ENCODE measurements at regions of chr1 and their contacts with region 1.

Region 1: DNA sequence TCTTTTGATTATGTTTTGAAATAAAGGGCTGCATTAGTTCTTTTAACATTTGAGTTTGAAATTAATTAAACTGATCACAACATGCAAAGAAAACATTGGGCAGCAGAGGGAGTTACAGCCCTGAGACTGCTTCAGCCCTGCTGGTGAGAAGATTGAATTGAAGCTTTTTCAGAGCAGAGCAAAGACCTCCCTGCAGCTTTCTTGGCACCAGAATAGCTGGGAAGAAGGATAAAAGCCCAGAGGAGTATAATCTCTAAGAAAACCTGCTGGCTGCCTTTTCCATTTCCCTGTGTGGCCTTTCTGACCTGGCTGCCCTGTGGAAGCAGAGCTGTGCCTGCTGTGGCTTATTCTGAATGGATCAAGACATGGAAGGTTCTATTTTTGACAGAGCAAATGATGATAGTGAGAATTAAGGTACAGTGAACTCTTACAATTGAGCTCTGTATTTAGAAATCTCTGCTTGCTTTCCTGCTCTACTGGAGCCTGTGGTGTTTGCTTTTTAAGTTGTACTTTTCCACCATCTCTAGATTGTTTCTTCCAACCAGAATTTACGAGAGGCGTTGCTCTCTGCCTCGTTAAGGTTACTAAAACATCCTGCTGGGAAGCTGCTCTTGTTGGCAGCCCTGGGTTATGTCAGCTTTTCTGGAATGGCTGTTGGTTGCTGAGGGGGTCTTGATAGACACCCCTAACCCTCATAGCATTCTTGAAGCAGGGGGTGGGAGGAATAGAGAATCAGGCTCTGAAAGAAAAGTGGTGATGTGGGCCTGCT is 9.9 kb downstream of the SNRPE start:
- DNase-seq: peak; percentile 76 to 94
- ATAC-seq: peak; percentile 94 to 96
- H3K4me3 ChIP-seq: no peak overlapping the region
- H3K27ac ChIP-seq: peak overlapping the region in 1 of 2 experiments; percentile 23; a peak in 1 of 6 replicates
- H3K4me1 ChIP-seq: peaks cover 6% of the 10 kb centered on the region; the same call in 2 of the 3 replicates
- CTCF ChIP-seq: peak; percentile 96
- EP300 ChIP-seq: no peak
- POLR2A ChIP-seq: no peak
- RAD21 ChIP-seq: peak; percentile 96 to 98

Region 2: DNA sequence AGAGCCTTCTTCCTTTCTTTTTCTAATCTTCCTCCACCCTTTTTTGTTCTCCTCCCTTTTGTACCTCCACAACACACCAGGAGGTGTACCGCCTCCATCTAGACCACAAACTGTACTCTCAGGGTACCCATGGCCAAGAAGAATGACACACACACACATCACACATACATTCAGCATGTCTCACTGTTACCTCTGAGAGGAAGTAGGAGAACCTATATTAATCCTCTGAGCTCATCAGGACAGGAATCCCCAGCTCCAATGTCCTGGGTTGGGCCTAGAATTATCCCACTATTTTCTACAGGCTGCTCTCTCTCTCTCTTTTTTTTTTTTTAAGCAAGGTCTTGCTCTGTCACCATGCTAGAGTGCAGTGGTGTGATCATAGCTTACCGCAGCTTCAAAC is 208.0 kb before region 1 on chr1:
- CTCF ChIA-PET with region 1: no interaction called
- POLR2A ChIA-PET with region 1: no interaction called
- DNase-seq: peak; percentile 31 to 52
- ATAC-seq: peak; percentile 88 to 92
- H3K4me3 ChIP-seq: no peak overlapping the region
- H3K27ac ChIP-seq: peak overlapping the region; percentile 6 to 42; a peak in 2 of 6 replicates
- H3K4me1 ChIP-seq: peaks cover 18% of the 10 kb centered on the region; the same call in 2 of the 3 replicates
- CTCF ChIP-seq: no peak
- EP300 ChIP-seq: no peak
- POLR2A ChIP-seq: no peak
- RAD21 ChIP-seq: no peak

Region 3: GRCh38 chr1:203898458-203899244 is 27.4 kb after region 1 on chr1:
- CTCF ChIA-PET with region 1: interaction called, 30 read pairs
- POLR2A ChIA-PET with region 1: no interaction called
- DNase-seq: no peak
- ATAC-seq: peak; percentile 39 to 63; a peak in 4 of 6 replicates
- H3K4me3 ChIP-seq: no peak overlapping the region
- H3K27ac ChIP-seq: peak overlapping the region in 1 of 2 experiments; percentile 5; a peak in 1 of 6 replicates
- H3K4me1 ChIP-seq: peaks cover 16% of the 10 kb centered on the region; the same call in 2 of the 3 replicates
- CTCF ChIP-seq: no peak
- EP300 ChIP-seq: no peak
- POLR2A ChIP-seq: no peak
- RAD21 ChIP-seq: no peak

Region 4: DNA sequence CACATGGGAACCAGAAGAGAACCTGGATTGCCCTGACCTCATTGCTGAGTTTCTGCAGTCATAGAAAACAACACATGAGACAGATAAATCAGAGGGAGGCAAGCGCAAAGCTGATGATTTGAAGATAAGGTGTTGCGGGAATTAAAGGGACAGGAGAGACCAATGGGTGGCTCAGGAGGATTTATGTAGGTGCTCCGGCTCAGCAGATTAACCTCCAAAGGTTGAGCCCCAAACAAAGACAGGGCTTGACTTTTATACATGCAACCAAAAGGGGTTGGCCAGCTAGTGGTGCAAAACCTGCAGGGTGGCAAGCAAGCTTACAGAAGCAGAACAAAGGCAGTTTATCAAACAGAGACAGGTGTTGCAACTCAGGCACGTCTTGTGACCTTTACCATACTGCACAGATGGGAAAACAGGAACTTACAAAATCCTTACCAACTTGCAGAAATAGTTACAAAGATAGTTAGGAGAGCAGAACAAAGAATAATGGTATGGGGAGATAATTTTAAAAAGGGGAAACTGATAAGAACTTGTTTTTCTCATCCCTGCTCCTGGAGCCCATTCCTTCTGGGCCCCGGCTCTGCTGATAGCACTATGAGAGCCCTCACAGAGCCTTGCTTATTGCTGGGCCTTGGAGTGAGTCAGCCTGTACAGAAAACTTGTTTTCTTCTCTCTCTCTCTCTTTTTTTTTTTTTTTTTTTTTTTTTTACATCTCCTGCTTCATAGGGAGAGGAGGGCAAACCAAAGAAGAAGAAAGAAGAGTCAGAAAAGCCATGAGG is 83.7 kb after region 1 on chr1:
- CTCF ChIA-PET with region 1: interaction called, 10 read pairs
- POLR2A ChIA-PET with region 1: no interaction called
- DNase-seq: peak in 1 of 2 experiments; percentile 7
- ATAC-seq: no peak
- H3K4me3 ChIP-seq: no peak overlapping the region
- H3K27ac ChIP-seq: no peak overlapping the region
- H3K4me1 ChIP-seq: no peaks in the 10 kb centered on the region
- CTCF ChIP-seq: no peak
- EP300 ChIP-seq: no peak
- POLR2A ChIP-seq: no peak
- RAD21 ChIP-seq: no peak

Region 5: GRCh38 chr1:204065174-204065985 is 194.1 kb after region 1 on chr1:
- CTCF ChIA-PET with region 1: interaction called, 35 read pairs
- POLR2A ChIA-PET with region 1: no interaction called
- DNase-seq: no peak
- ATAC-seq: no peak; a peak in 1 of 6 replicates
- H3K4me3 ChIP-seq: no peak overlapping the region
- H3K27ac ChIP-seq: no peak overlapping the region
- H3K4me1 ChIP-seq: no peaks in the 10 kb centered on the region
- CTCF ChIP-seq: no peak
- EP300 ChIP-seq: no peak
- POLR2A ChIP-seq: no peak
- RAD21 ChIP-seq: no peak

Region 6: GRCh38 chr1:204094856-204095644 is 223.8 kb after region 1 on chr1:
- CTCF ChIA-PET with region 1: interaction called, 11 read pairs
- POLR2A ChIA-PET with region 1: no interaction called
- DNase-seq: no peak
- ATAC-seq: peak in 1 of 2 experiments; percentile 33; a peak in 1 of 6 replicates
- H3K4me3 ChIP-seq: no peak overlapping the region
- H3K27ac ChIP-seq: 0 out of 6 replicates have a peak overlapping the region, but pooled peaks of 1 of the 2 experiments have one; percentile 80
- H3K4me1 ChIP-seq: peaks cover 27% of the 10 kb centered on the region
- CTCF ChIP-seq: no peak
- EP300 ChIP-seq: no peak
- POLR2A ChIP-seq: no peak
- RAD21 ChIP-seq: no peak

Measured in A549 (cell line).